ENCODE measurements at regions of chr10 and their contacts with region 1.

Region 1: DNA sequence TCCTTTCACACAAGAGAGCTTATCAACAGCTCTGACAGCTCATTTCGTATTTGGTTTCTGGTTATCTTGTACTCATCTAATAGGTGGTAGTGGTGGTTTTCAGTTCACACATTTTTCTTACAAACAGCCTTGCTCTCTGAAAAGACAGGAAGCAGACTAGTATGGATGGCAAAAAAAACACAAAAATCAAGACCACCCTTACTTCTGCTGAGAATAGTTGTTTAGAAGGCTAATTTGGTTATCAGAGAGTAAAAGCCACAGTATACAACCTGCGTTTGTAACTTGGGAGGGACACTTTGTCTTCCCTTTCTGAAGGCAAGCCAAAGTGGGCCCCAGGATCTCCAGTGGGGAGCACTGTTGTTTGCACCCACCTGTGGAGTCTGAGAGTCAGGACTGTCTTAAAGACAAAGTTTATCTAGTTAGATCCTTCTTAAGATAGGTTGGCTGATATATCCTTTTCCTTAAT is 68.0 kb downstream of the PIP4K2A start:
- DNase-seq: no peak
- H3K4me3 ChIP-seq: no peak overlapping the region
- H3K27me3 ChIP-seq: no peaks in the 10 kb centered on the region
- CTCF ChIP-seq: no peak

Region 2: GRCh38 chr10:21953585-21954057 is 692.8 kb before region 1 on chr10:
- CTCF ChIA-PET with region 1: no interaction called
- POLR2A ChIA-PET with region 1: no interaction called
- DNase-seq: no peak
- H3K4me3 ChIP-seq: no peak overlapping the region
- H3K27me3 ChIP-seq: no peaks in the 10 kb centered on the region
- CTCF ChIP-seq: peak; percentile 51

Region 3: GRCh38 chr10:22550732-22551131 is 95.7 kb before region 1 on chr10:
- CTCF ChIA-PET with region 1: no interaction called
- POLR2A ChIA-PET with region 1: no interaction called
- DNase-seq: no peak
- H3K4me3 ChIP-seq: no peak overlapping the region
- H3K27me3 ChIP-seq: no peaks in the 10 kb centered on the region
- CTCF ChIP-seq: peak; percentile 56

Region 4: GRCh38 chr10:22683140-22683389 is 36.6 kb after region 1 on chr10:
- CTCF ChIA-PET with region 1: no interaction called
- POLR2A ChIA-PET with region 1: interaction called, 13 read pairs
- DNase-seq: no peak
- H3K4me3 ChIP-seq: no peak overlapping the region
- H3K27me3 ChIP-seq: no peaks in the 10 kb centered on the region
- CTCF ChIP-seq: no peak

Region 5: DNA sequence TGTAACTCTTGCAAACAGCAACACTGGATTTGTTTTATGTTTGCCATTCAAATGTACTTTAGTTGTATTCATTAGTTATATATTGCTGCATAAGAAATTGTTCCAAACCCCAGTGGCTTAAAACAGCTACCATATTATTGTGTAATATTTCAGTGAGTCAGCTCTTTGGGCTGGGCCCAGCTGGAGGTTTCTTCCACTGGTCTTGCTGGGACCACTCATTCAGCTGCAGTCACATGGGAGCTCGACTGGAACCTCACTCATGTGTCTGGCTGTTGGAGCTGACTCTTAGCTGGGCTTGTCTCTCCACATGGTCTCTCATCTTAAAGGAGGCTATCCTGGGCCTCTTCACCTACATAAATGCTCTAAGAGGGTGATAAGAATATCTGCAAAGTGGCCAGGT is 91.2 kb after region 1 on chr10:
- CTCF ChIA-PET with region 1: no interaction called
- POLR2A ChIA-PET with region 1: no interaction called
- DNase-seq: no peak
- H3K4me3 ChIP-seq: no peak overlapping the region
- H3K27me3 ChIP-seq: no peaks in the 10 kb centered on the region
- CTCF ChIP-seq: no peak